ENCODE measurements at regions of chr1 and their contacts with region 1.

Region 1: GRCh38 chr1:165392634-165393571 is 36.4 kb upstream of the LMX1A start:
- DNase-seq: peak; percentile 61 to 73
- ATAC-seq: peak; percentile 82 to 95
- H3K4me3 ChIP-seq: no peak overlapping the region
- H3K27ac ChIP-seq: no peak overlapping the region
- H3K4me1 ChIP-seq: no peaks in the 10 kb centered on the region
- CTCF ChIP-seq: peak; percentile 88
- EP300 ChIP-seq: no peak
- POLR2A ChIP-seq: no peak
- RAD21 ChIP-seq: peak; percentile 82 to 83

Region 2: DNA sequence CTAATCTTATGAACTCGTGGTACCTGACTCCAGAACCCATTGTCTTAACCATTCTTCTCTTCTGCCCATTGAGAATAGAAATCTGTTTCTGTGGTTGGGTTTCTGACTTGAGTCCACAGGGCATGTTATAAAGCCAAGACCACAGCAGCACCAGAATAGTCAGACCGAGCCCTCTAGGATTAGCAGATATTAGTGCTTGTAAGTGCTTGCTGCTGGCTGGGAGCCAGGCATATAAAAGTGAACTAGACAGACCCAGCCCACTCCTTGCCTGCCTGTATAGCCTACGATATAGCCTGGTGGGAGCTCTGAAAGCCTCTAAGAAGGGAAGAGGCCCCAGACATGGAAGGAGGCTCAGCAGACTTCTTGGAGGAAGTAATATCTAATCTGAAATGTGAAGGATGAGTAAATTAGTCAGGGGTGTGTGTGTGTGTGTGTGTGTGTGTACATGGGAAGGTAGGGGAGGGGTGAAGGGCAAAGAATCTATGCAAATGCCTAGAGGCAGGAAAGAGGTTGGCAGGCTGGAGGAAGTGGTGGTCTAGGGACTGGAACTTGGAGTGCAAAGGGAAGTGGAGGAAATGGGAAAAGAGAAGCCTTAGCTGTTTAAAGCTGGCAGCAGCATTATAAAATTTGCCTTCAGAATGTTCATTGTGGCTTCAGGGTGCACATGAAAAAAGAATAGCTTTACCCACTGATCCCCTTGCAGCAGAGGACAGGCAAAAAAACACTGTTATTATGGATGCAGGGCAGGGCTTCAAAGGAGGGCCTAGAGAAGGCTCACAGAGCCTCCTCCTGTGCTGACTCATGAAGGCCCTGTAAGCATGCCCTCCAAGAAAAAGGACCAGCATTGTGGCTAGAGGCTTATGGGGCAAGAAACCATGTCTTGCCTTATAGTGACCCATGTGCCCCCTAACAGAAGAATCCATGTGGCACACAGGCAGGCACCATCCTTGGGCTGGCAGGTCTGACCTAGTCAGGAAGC is 205.6 kb before region 1 on chr1:
- CTCF ChIA-PET with region 1: no interaction called
- POLR2A ChIA-PET with region 1: no interaction called
- DNase-seq: no peak
- ATAC-seq: no peak; a peak in 1 of 6 replicates
- H3K4me3 ChIP-seq: no peak overlapping the region
- H3K27ac ChIP-seq: no peak overlapping the region
- H3K4me1 ChIP-seq: no peaks in the 10 kb centered on the region
- CTCF ChIP-seq: no peak
- EP300 ChIP-seq: no peak
- POLR2A ChIP-seq: no peak
- RAD21 ChIP-seq: no peak

Region 3: DNA sequence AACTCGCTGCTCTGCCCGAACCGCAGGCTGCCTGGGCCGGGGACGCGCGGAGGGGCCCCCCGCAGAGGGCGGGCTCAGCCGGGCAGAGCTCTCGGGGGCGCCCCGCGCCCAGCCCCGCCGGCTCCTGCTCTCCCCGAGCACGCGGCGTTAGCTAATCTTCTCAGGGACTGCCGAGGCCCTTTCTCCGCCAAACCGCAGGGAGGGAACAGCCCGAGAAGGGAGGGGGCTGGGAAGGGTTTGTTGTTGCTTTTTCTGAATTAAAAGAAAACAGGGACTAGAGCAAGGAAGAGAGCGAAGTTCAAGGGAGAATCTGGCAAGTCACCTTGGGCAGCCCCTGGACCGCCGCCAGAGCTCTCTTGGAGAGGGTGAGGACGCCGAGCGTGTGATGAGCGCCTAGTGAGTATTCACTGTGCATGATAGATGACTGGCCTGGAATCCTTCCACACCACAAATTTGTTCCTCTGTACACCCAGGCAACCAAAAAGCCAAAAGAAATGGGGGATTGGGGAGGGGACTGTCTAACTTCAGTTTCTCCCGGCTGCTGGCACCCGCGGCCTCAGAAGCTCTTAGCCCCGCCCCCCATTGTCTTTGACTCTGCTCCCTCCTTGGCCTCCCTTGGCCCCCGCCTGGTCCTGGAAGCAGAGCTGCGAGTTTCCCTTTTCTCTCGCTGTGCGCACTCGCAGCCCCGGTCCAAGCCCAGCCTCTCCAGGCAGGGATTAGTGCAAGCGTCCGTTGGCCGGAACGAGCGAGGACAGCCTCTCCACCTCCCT is 16.7 kb before region 1 on chr1:
- CTCF ChIA-PET with region 1: interaction called, 42 read pairs
- POLR2A ChIA-PET with region 1: no interaction called
- DNase-seq: no peak
- ATAC-seq: peak; percentile 38 to 57; a peak in 3 of 6 replicates
- H3K4me3 ChIP-seq: no peak overlapping the region
- H3K27ac ChIP-seq: no peak overlapping the region
- H3K4me1 ChIP-seq: no peaks in the 10 kb centered on the region
- CTCF ChIP-seq: no peak
- EP300 ChIP-seq: no peak
- POLR2A ChIP-seq: no peak
- RAD21 ChIP-seq: no peak

Region 4: GRCh38 chr1:165403835-165404482 is 11.1 kb after region 1 on chr1:
- CTCF ChIA-PET with region 1: interaction called, 53 read pairs
- POLR2A ChIA-PET with region 1: no interaction called
- DNase-seq: peak; percentile 21 to 28
- ATAC-seq: peak; percentile 80 to 87
- H3K4me3 ChIP-seq: no peak overlapping the region
- H3K27ac ChIP-seq: no peak overlapping the region
- H3K4me1 ChIP-seq: no peaks in the 10 kb centered on the region
- CTCF ChIP-seq: peak; percentile 60
- EP300 ChIP-seq: no peak
- POLR2A ChIP-seq: no peak
- RAD21 ChIP-seq: peak; percentile 75 to 76

Region 5: GRCh38 chr1:165545974-165546373 is 153.1 kb after region 1 on chr1:
- CTCF ChIA-PET with region 1: no interaction called
- POLR2A ChIA-PET with region 1: no interaction called
- DNase-seq: no peak
- ATAC-seq: no peak
- H3K4me3 ChIP-seq: no peak overlapping the region
- H3K27ac ChIP-seq: no peak overlapping the region
- H3K4me1 ChIP-seq: no peaks in the 10 kb centered on the region
- CTCF ChIP-seq: no peak
- EP300 ChIP-seq: no peak
- POLR2A ChIP-seq: no peak
- RAD21 ChIP-seq: no peak

Region 6: DNA sequence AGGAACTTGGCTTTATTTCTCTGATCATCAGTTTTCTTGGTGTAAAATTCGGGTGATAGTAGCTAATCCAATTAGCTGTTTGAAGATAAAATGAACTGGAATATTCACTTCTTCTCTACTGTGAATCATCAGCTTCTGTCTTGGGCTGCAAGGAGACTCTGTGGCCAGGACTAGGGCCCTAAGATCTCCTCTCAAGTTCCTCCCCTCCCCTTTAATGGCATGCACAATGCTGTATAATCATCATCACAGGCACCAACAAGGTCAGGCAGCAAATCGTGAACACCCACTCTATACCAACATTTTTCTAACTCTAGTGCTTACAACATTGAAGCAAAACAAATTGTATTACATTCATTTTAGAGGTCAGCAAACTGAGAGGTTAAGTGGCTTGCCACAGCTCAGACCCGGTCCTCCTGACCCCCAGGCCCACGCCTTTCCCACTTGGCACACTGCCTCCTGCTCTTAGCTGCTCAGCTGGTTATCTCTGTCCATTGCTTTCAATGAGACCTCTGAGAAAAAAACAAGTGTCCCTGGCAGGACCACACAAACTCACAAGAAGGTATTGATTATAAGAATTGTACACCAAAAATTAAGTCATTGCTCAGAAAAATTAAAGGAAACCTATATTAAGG is 182.7 kb after region 1 on chr1:
- CTCF ChIA-PET with region 1: interaction called, 12 read pairs
- POLR2A ChIA-PET with region 1: no interaction called
- DNase-seq: no peak
- ATAC-seq: no peak
- H3K4me3 ChIP-seq: no peak overlapping the region
- H3K27ac ChIP-seq: no peak overlapping the region
- H3K4me1 ChIP-seq: no peaks in the 10 kb centered on the region
- CTCF ChIP-seq: no peak
- EP300 ChIP-seq: no peak
- POLR2A ChIP-seq: no peak
- RAD21 ChIP-seq: no peak

Region 7: DNA sequence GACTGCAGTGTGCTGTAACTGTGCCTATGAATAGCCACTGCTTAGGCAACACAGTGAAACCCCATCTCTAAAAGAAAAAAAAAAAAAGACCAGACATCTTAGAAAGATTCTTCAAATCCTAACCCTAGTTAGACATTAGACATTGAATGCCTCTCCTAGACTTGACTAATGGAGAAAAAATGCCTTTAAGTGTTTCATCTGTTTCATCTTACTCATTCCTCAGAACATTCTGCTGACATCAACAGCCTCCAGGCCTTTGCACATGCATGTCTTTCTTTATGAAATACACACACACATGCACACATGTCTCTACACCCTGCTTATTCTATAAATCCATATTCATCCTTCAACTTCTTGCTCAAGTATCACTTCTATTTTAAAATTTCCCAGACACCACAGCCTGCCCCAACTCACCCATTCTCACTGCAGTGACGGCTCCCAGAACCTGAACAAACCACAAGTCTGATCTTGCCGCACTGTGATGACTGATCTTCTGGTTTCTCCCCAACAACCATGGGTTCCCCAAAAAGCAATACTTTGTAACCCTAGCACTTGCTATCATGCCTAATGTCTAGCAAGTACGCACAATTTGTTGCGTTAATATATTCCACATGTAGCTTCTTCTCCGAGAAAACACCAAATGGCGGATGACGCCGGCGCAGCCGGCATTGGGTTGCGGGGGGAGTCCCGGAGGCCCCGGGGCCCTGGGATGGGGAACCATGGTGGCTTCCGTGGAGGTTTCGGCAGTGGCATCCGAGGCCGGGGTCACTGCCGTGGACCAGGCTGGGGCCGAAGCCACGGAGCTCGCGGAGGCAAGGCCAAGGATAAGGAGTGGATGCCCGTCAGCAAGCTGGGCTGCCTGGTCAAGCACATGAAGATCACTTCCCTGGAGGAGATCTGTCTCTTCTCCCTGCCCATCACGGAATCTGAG is 188.3 kb after region 1 on chr1:
- CTCF ChIA-PET with region 1: interaction called, 12 read pairs
- POLR2A ChIA-PET with region 1: no interaction called
- DNase-seq: no peak
- ATAC-seq: 0 out of 6 replicates have a peak, but pooled peaks of 1 of the 2 experiments have one; percentile 32
- H3K4me3 ChIP-seq: no peak overlapping the region
- H3K27ac ChIP-seq: no peak overlapping the region
- H3K4me1 ChIP-seq: no peaks in the 10 kb centered on the region
- CTCF ChIP-seq: no peak
- EP300 ChIP-seq: no peak
- POLR2A ChIP-seq: no peak
- RAD21 ChIP-seq: no peak

Region 8: DNA sequence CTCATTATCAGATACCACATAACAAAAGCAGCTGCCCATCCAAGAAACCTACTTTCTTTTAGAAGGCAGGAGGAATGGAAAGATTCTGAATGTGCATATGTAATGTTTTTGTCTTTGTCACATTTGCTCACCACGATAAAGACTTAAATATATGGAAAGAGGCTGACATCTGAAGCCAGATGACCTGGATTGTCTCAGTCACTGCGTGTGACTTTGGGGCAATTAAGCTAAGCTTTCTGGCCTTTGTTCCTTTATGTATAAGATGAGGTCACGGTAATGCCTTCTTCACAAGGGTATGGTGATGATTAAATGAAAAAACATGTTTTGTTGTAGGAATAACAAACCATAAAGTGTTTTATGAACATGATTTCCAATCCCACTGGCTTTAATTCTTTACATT is 193.5 kb after region 1 on chr1:
- CTCF ChIA-PET with region 1: interaction called, 219 read pairs
- POLR2A ChIA-PET with region 1: no interaction called
- DNase-seq: no peak
- ATAC-seq: no peak
- H3K4me3 ChIP-seq: no peak overlapping the region
- H3K27ac ChIP-seq: no peak overlapping the region
- H3K4me1 ChIP-seq: no peaks in the 10 kb centered on the region
- CTCF ChIP-seq: no peak
- EP300 ChIP-seq: no peak
- POLR2A ChIP-seq: no peak
- RAD21 ChIP-seq: no peak

Measured in A549 (cell line).